MCF 10A (cell line): ENCODE measurements at regions of chr11 and their contacts with region 1.

Region 1: GRCh38 chr11:2975594-2975993 is 16.5 kb downstream of the NAP1L4 start:
- DNase-seq: peak; percentile 62
- H3K4me3 Mint-ChIP-seq: no peak overlapping the region
- H3K27ac Mint-ChIP-seq: no peak overlapping the region
- H3K4me1 Mint-ChIP-seq: peaks cover 6% of the 10 kb centered on the region
- H3K27me3 Mint-ChIP-seq: no peaks in the 10 kb centered on the region
- CTCF ChIP-seq: peak; percentile 50

Region 2: DNA sequence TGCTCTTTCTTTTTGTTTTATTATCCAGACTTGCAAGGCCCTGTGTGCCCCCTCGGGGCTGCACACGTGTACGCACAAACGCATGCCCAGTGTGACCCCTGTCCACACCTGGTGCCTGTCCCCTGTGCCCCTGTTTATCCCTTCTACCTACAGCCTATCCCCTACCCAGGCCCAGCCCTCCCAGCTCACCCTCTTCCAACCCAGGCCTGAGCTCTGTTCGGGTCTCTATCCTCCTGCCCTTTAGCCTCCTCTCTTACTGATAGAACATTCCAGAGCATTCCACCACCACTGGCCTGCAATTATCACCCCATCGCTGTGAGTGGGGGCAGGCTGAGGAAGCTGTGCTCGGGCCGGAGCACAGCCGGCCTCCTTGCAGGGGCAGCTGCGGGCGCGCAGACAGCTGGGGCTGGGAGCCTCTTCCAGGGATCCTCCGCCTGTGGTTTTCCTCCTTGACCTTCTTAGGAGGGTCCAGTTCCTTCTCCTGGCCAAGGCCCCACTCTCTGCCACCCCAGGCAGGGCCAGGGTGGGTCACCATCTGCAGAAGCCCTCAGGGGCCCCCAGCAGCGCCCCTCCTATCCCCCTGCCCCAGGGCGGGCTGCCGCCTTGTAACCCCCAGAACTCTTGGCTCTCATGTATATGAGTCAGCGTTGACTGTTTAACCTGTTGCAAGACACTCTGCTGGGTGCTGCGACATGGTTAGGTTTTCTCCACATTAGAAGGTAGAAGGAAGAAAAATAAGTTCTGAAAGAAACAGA is 234.0 kb before region 1 on chr11:
- CTCF ChIA-PET with region 1: no interaction called
- POLR2A ChIA-PET with region 1: no interaction called
- intact Hi-C with region 1: no loop called
- DNase-seq: peak; percentile 79
- H3K4me3 Mint-ChIP-seq: no peak overlapping the region
- H3K27ac Mint-ChIP-seq: no peak overlapping the region
- H3K4me1 Mint-ChIP-seq: peaks cover 17% of the 10 kb centered on the region
- H3K27me3 Mint-ChIP-seq: no peaks in the 10 kb centered on the region
- CTCF ChIP-seq: no peak

Region 3: GRCh38 chr11:2992234-2992996 is 16.8 kb after region 1 on chr11 and contains the start of gene NAP1L4:
- CTCF ChIA-PET with region 1: interaction called, 17 read pairs
- POLR2A ChIA-PET with region 1: interaction called, 40 read pairs
- intact Hi-C with region 1: loop called (anchors 2 kb)
- DNase-seq: peak; percentile 97
- H3K4me3 Mint-ChIP-seq: peak within 1 kb of the TSS; percentile 96
- H3K27ac Mint-ChIP-seq: peak within 1 kb of the TSS; percentile 99
- H3K4me1 Mint-ChIP-seq: peaks cover 21% of the 10 kb centered on the region
- H3K27me3 Mint-ChIP-seq: no peaks in the 10 kb centered on the region
- CTCF ChIP-seq: no peak
- total RNA-seq, gene NAP1L4: 103 TPM in 2 replicates

Region 4: DNA sequence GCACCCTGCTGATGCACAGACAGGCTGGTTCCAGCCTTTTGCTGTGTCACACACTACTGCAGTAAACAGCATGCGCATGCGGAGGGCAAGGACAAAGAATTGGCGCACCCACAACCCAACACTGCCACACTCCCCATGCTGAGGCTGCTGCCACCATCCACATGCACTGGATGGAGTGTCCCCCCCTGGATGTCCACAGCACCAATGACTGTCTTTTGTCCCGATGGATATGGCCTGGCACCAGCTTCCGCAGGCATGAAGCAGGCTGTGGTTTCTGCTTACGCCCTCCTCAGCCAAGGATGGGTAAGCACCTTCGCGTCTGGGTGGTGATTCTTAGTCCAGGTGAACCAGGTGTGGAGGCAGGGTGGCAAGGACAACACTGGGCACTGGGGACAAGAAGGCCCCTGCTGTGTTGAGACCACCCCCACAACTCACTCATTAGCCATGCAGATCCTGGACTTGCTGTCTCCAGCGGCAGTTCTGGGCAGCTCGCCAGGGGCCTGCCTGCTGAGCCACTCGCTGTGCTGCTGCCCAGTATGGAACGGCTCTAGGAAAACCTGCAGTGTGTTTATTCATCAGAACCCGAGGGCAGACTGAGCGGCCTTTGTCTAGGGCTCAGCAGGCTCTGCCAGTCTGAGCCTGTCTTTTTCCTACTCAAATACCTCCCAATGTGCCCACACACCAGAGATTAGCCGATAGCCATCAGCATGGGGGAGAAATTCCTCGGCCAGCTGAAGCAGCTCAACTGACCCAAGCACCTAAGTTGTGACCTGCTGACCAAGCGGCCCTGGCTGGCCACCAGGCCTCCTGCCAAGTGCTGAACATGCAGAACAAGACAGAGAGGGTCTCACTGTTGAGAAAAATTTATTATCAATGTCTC is 24.7 kb after region 1 on chr11:
- CTCF ChIA-PET with region 1: interaction called, 22 read pairs
- POLR2A ChIA-PET with region 1: interaction called, 4 read pairs
- intact Hi-C with region 1: no loop called
- DNase-seq: peak; percentile 90
- H3K4me3 Mint-ChIP-seq: no peak overlapping the region
- H3K27ac Mint-ChIP-seq: peak overlapping the region; percentile 52
- H3K4me1 Mint-ChIP-seq: peaks cover 42% of the 10 kb centered on the region
- H3K27me3 Mint-ChIP-seq: no peaks in the 10 kb centered on the region
- CTCF ChIP-seq: no peak